Natural killer cell (primary cell): ENCODE measurements at regions of chr1 and their contacts with region 1.

Region 1: DNA sequence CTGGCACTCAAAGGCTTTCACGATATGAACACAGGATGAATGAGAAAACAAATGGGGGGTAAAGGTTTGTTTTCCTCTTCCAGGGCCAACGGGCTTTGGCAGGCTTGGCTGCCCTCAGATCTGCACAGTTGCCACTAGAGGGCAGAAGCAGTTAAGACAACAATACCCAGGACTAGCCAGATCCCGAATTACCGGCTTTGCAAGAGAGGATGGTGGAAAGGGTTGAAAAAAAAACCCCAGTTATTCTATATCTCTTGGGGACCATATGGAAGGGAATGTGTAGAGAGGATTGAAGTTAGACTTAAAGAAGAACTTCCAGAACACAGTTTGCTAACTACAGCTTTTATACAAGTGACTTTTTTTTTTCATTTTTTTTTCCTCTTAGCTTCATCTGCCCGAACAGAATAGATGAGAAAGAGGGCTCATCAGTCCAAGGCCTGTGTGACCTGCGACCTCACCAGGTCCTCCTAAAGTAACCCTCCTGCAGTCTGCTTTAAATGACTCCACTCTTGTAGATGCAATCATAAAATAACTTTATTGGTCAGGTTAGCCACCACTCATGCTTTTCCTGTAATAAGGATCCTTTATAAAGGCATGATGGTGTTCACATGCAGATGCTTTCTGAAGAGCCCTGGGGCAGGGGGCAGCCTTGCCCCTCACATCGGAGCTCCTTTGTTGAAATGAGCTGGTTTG is 10.7 kb downstream of the FMOD start:
- DNase-seq: peak; percentile 28 to 84
- ATAC-seq: peak; percentile 74 to 77 (median 77)
- H3K4me3 ChIP-seq: no peak overlapping the region
- H3K4me3 Mint-ChIP-seq: no peak overlapping the region
- H3K27ac ChIP-seq: no peak overlapping the region
- H3K27ac Mint-ChIP-seq: no peak overlapping the region
- H3K4me1 ChIP-seq: peaks cover 6% of the 10 kb centered on the region
- H3K4me1 Mint-ChIP-seq: peaks cover 20 to 23% of the 10 kb centered on the region in 2 donors
- H3K27me3 ChIP-seq: peaks cover 7% of the 10 kb centered on the region
- H3K27me3 Mint-ChIP-seq: peaks cover 31 to 32% of the 10 kb centered on the region in 2 donors
- CTCF ChIP-seq: peak; percentile 85

Region 2: GRCh38 chr1:203267347-203267846 is 72.9 kb before region 1 on chr1:
- intact Hi-C with region 1: loop called (anchors 1 kb)
- DNase-seq: peak; percentile 71 to 94
- ATAC-seq: peak; percentile 75 to 87 (median 80)
- H3K4me3 ChIP-seq: peak overlapping the region; percentile 56
- H3K4me3 Mint-ChIP-seq: peak overlapping the region; percentile 91
- H3K27ac ChIP-seq: peak overlapping the region; percentile 54
- H3K27ac Mint-ChIP-seq: peak overlapping the region; percentile 78 to 80
- H3K4me1 ChIP-seq: peaks cover 20% of the 10 kb centered on the region
- H3K4me1 Mint-ChIP-seq: peaks cover 12% of the 10 kb centered on the region in 2 donors
- H3K27me3 ChIP-seq: no peaks in the 10 kb centered on the region
- H3K27me3 Mint-ChIP-seq: peaks cover 0 to 6% of the 10 kb centered on the region in 2 donors
- CTCF ChIP-seq: peak; percentile 98

Region 3: DNA sequence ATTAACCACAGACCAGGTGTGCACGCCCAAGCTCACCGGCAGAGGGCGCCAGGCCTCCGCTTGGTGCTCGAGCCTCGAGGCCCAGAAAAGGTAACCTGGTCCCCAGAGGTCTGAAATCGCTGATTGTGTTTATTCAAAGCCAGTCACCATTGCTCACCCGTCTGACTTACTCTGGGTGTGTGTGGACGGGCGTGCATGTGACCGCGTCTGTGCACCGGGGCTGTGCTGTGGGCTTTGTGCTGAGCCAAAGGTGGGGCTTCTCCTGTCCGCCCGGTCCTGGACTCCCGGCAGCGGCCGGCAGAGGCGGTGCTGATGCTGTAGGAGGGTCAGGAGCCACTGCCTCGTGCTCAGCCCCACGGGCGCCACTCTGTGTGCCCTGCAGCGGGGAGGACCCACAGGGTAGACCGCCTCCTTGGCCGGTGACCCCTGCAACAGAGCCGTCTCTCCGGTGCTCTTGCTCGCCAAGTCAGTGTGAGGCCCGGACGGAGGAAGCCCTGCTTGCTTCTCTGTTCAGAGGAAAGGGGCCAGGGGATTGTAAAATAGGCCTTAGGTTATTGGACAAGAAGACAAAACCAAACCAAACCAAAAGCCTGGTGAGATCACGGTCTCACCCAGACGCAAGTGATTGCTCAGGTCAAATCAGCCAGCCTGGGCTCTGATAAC is 66.9 kb before region 1 on chr1:
- intact Hi-C with region 1: loop called (anchors 1 kb)
- DNase-seq: peak; percentile 88 to 95
- ATAC-seq: peak; percentile 82 to 90 (median 84)
- H3K4me3 ChIP-seq: peak overlapping the region; percentile 32
- H3K4me3 Mint-ChIP-seq: peak overlapping the region; percentile 52
- H3K27ac ChIP-seq: peak overlapping the region; percentile 39
- H3K27ac Mint-ChIP-seq: peak overlapping the region; percentile 60 to 80
- H3K4me1 ChIP-seq: peaks cover 50% of the 10 kb centered on the region
- H3K4me1 Mint-ChIP-seq: peaks cover 7 to 23% of the 10 kb centered on the region in 2 donors
- H3K27me3 ChIP-seq: no peaks in the 10 kb centered on the region
- H3K27me3 Mint-ChIP-seq: no peaks in the 10 kb centered on the region
- CTCF ChIP-seq: peak; percentile 96

Region 4: GRCh38 chr1:203408486-203409427 is 68.5 kb after region 1 on chr1:
- intact Hi-C with region 1: no loop called
- DNase-seq: no peak
- ATAC-seq: no peak
- H3K4me3 ChIP-seq: no peak overlapping the region
- H3K4me3 Mint-ChIP-seq: no peak overlapping the region
- H3K27ac ChIP-seq: no peak overlapping the region
- H3K27ac Mint-ChIP-seq: no peak overlapping the region
- H3K4me1 ChIP-seq: no peaks in the 10 kb centered on the region
- H3K4me1 Mint-ChIP-seq: no peaks in the 10 kb centered on the region
- H3K27me3 ChIP-seq: no peaks in the 10 kb centered on the region
- H3K27me3 Mint-ChIP-seq: peaks cover 30 to 46% of the 10 kb centered on the region in 2 donors
- CTCF ChIP-seq: no peak

Region 5: DNA sequence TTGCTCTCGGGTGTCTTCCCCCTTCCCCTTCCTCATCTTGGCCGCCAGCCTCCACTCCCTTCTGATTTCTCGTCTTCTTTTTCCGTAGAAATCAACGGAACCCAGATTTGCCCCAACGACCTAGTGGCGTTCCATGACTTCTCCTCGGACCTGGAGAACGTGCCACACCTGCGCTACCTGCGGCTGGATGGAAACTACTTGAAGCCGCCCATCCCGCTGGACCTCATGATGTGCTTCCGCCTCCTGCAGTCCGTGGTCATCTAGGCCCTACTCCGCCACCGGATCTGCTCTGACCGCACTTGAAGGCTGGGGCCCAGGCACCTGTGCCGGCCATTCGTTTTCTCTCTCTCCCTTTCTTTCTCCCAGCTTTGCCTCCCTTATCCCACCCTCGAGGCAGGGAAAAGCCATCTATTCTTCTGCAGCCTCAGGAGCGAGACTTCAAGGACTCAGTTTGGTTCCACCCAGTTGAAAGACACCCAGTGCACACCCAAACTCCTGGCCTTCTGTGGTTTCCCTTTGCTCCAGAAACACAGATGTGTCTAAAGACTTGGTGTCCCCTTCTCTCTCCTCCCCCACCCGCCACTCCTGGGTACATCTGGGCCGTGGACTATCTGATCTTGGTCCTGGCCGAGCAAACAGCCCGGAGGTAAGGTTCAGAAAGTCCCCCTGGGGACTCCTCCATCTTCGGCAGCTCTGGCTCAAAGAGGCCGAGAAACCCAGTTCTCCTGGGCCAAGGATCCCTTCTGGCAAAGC is 146.5 kb after region 1 on chr1:
- intact Hi-C with region 1: loop called (anchors 2 kb)
- DNase-seq: peak in 1 of 2 donors; percentile 16
- ATAC-seq: no peak
- H3K4me3 ChIP-seq: no peak overlapping the region
- H3K4me3 Mint-ChIP-seq: peak overlapping the region; percentile 73
- H3K27ac ChIP-seq: no peak overlapping the region
- H3K27ac Mint-ChIP-seq: peak overlapping the region in 1 of 2 donors; percentile 19
- H3K4me1 ChIP-seq: peaks cover 14% of the 10 kb centered on the region
- H3K4me1 Mint-ChIP-seq: peaks cover 0 to 6% of the 10 kb centered on the region in 2 donors
- H3K27me3 ChIP-seq: no peaks in the 10 kb centered on the region
- H3K27me3 Mint-ChIP-seq: peaks cover 6 to 11% of the 10 kb centered on the region in 2 donors
- CTCF ChIP-seq: no peak

Region 6: DNA sequence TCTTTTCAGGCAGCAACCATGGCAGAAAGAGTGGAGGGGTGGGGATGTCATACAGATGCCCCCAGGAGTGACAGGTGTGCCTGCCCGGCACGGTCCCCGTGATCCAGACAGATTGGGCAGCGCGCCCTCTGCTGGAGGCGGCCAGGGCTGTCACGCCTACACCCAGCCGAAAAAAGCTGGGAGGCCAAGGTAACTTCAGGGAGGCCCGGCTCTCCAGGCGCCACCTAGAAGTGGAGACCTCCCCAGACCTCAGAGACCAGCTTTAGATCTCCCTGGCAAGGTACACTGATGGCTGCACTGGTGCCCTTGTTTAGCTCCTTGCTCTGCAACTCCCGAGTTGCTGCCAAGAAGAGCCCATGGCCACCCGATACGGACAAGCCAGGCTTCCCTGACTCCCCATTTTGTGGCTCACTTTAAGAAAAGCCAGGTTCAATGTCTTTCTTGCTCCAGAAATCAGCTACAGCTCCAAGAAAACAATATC is 866.9 kb after region 1 on chr1:
- intact Hi-C with region 1: no loop called
- DNase-seq: peak; percentile 71 to 80
- ATAC-seq: peak; percentile 84 to 98 (median 95)
- H3K4me3 ChIP-seq: no peak overlapping the region
- H3K4me3 Mint-ChIP-seq: no peak overlapping the region
- H3K27ac ChIP-seq: no peak overlapping the region
- H3K27ac Mint-ChIP-seq: no peak overlapping the region
- H3K4me1 ChIP-seq: peaks cover 4% of the 10 kb centered on the region
- H3K4me1 Mint-ChIP-seq: no peaks in the 10 kb centered on the region
- H3K27me3 ChIP-seq: peaks cover 2% of the 10 kb centered on the region
- H3K27me3 Mint-ChIP-seq: peaks cover 30 to 48% of the 10 kb centered on the region in 2 donors
- CTCF ChIP-seq: peak; percentile 94